ENCODE measurements at regions of chr16 and their contacts with region 1.

Region 1: DNA sequence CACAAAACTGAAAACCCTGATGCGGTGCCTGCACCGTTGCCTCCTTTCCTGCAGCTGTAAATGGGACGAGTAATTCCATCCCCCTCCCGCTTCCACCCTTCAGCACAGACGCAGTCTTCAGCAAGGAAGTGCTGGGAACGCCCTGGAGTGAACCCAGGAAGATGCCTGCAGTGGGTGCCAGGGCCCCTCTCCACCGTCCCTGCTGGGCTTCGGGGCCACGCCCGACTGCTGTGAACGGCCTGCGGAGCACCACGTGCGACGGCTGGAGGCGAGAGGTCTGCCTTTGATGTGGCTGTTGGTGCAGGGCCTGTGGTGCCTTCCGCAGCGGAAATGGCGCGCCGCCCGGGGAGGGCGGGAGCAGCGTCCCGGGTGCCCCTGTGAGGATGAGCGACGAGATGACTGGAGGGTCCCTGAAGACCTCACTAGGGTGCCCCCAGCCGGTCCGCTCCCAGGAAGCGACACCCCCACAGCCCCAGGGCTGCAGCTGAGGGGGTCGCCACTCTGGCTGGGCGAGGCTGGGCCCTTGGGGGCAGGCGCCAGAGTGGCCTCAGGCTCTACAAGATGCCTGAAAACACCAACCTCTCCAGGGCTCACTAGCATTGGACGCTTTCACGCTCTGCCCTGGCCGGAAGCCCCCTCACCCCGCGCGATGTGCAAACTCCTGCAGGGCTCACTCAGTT is 749 bp upstream of the MC1R start:
- DNase-seq: no peak
- H3K4me3 ChIP-seq: peak overlapping the region; percentile 38
- H3K27me3 ChIP-seq: no peaks in the 10 kb centered on the region
- CTCF ChIP-seq: no peak

Region 2: GRCh38 chr16:89944773-89945172 is 26.9 kb after region 1 on chr16:
- CTCF ChIA-PET with region 1: no interaction called
- POLR2A ChIA-PET with region 1: no interaction called
- DNase-seq: no peak
- H3K4me3 ChIP-seq: no peak overlapping the region
- H3K27me3 ChIP-seq: no peaks in the 10 kb centered on the region; the same call in 1 of the 2 replicates
- CTCF ChIP-seq: no peak

Region 3: GRCh38 chr16:89972244-89973234 is 54.6 kb after region 1 on chr16:
- CTCF ChIA-PET with region 1: no interaction called
- POLR2A ChIA-PET with region 1: interaction called, 15 read pairs
- DNase-seq: peak; percentile 40
- H3K4me3 ChIP-seq: peak overlapping the region; percentile 92
- H3K27me3 ChIP-seq: no peaks in the 10 kb centered on the region
- CTCF ChIP-seq: no peak

Measured in BJ (cell line).